ENCODE measurements at regions of chr12 and their contacts with region 1.

Region 1: GRCh38 chr12:14995583-14996425 is 23.0 kb downstream of the PDE6H start:
- DNase-seq: no peak
- ATAC-seq: peak; percentile 42

Region 2: DNA sequence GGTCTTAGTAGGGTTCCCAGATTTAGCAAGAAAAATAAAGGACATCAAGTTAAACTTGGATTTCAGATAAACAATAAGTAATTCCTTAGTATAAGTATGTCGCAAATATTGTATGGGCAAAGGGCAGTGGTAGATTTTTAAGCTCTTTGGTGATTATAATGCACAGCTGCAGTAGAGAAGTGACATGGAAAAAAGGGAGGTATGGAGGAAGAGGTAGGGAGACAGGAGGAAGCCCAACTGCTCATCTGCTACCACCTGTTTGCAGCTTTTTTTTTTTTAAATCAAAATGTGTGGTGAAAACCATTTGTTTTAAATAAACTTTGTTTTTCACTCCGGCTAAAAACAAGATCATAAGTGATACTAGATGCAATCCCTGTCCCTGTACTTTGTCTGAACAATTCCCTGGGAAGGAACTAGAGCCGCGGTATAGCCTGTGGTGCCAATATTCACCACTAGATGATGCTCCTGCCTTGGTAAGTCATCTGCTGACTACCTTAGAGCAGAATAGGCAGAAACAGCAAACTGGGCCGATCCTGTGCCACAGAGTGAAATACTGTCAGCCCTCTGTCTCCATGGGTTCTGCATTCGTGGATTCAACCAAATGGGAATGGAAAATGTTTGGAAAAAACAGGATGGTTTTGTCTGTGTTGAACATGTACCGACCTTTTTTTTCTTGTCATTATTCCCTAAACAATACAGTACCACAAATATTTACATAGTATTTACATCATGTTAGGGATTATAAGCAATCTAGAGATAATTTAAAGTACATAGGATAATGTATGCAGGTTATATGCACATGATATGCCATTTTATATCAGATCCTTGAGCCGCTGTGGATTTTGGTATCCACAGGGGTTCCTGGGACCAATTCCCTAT is 365.7 kb before region 1 on chr12:
- intact Hi-C with region 1: loop called (anchors 10 kb)
- DNase-seq: peak; percentile 67
- ATAC-seq: peak; percentile 97

Region 3: GRCh38 chr12:14723763-14724162 is 272.0 kb before region 1 on chr12:
- intact Hi-C with region 1: loop called (anchors 5 kb)
- DNase-seq: peak; percentile 66
- ATAC-seq: peak; percentile 84

Region 4: GRCh38 chr12:14803011-14803829 is 192.6 kb before region 1 on chr12 and contains the starts of genes C12orf60 and WBP11:
- intact Hi-C with region 1: loop called (anchors 1 kb)
- DNase-seq: peak; percentile 95
- ATAC-seq: peak; percentile 100
- total RNA-seq, gene C12orf60: 2.0 TPM
- total RNA-seq, gene WBP11: 48.0 TPM

Region 5: GRCh38 chr12:15220994-15221885 is 225.4 kb after region 1 on chr12 and contains the start of gene RERG:
- intact Hi-C with region 1: loop called (anchors 5 kb)
- DNase-seq: peak; percentile 88
- ATAC-seq: peak; percentile 99
- total RNA-seq, gene RERG: 4.0 TPM

Region 6: DNA sequence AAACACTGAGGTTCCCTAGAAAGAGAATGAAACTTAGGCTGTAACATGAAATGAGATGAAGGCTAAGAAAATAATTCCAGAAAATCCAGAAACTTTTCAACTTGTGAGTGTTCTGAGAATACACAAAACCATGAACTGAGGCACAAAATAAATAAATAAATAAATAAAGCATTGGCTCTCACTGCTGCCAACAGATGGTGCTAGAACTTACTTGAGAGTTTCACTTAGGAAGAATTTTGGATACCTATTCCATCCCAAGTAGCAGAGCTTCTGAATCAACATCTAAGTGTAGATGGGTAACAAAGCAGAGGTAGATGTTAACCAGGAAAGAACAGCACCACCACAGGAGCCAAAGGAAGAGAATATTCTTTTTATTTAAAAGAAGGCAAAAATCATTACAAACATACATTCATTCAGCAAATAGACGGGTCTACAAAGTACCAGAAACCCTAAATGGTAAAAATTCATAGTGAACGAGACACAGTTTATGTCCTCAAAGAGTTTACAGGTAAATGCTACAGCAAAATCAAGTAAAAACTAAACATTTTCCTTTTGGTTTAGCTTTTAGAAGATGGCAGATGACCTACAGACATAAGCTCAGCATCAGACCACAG is 776.7 kb after region 1 on chr12:
- intact Hi-C with region 1: no loop called
- DNase-seq: no peak
- ATAC-seq: no peak